GM13976 (cell line): ENCODE measurements at regions of chr1 and their contacts with region 1.

Region 1: DNA sequence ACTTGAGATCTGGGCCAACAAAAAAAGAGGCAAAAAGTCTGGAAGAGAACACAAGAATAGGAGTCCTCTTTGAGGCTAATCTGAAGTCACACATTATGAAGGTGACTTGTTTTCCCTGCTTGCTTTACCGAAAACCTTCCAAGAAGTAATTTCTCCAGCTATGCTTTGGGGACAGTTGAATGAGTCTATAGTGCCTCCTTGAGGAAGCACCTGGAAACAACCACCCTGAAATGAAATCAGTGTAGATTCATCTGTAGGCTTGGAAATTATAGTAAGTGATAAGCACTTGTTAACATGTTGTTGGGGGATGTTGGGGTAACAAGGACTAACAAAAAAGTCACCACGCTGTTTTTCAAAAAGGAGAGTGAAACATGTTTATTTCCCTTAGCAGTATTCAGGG is 23.4 kb upstream of the RPTN start:
- DNase-seq: no peak
- CTCF ChIP-seq: peak; percentile 43

Region 2: DNA sequence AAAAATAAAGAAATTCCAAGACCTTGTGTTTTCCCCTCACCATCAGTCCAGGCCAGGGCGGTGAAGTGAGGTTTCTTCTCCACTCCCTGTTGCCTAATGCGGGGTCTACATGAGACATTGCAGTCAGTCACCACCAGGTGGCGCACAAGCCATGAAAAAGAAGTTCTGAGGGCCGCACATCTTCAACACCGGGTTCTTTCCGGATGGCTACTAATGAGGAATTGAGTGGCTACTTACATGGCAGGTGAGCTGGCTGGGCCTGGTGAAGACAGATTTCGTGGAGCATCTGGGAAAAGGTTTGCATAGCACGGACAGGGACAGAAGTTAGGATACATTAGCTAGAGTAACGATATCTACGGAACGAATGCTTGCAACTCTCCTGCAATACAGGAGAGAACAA is 129.8 kb before region 1 on chr1:
- in situ Hi-C with region 1: loop called (anchors 5 kb)
- DNase-seq: peak; percentile 73
- CTCF ChIP-seq: peak; percentile 89